Activated CD4-positive, alpha-beta memory T cell treated with anti-CD3 and anti-CD28 coated beads for 36 hours (primary cell): ENCODE measurements at regions of chr12 and their contacts with region 1.

Region 1: DNA sequence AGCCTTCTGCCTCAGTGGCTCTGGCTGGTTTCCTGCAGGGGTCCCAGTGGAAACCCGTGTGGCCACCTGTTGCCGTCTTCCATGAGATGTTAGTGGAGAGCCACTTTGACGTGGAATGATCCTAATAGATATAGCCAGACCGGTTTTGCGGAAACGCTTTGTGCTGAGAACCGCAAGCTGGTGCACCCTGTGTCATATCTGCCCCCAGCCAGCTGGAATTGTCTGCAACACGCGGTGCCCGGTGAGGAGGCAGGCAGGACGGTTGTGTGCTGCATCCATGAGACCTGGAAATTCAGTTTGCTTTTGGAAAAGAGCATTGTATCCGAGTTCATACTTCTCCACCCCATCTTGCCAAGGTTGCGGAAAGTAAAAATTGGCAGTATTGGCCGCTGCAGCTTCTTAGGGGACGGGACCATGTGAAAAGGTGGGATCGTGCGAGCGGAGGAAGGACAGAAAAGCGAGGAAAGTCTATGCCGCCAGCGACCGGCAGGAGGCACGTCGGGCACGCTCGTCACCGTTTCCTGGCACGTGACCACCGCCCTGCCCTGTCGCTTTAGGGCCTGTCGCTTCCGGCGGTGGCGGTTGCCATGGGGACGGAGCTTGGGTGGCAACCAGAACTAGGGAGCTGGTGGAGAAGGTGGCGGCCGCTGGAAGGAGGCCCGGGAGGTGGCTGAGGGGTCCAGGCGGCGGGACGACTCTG is at the start of gene CFAP251:
- DNase-seq: peak; percentile 98
- H3K4me3 Mint-ChIP-seq: peak within 1 kb of the TSS; percentile 77
- H3K27ac Mint-ChIP-seq: peak within 1 kb of the TSS; percentile 84
- H3K4me1 Mint-ChIP-seq: peaks cover 14% of the 10 kb centered on the region
- H3K27me3 Mint-ChIP-seq: no peaks in the 10 kb centered on the region
- total RNA-seq, gene CFAP251: 1.3 to 1.6 TPM

Region 2: GRCh38 chr12:122021822-122022526 is 103.8 kb after region 1 on chr12 and contains the start of gene BCL7A:
- CTCF ChIA-PET with region 1: interaction called, 3 read pairs
- POLR2A ChIA-PET with region 1: no interaction called
- intact Hi-C with region 1: loop called (anchors 10 kb)
- DNase-seq: peak; percentile 65
- H3K4me3 Mint-ChIP-seq: peak within 1 kb of the TSS; percentile 78
- H3K27ac Mint-ChIP-seq: peak within 1 kb of the TSS; percentile 49
- H3K4me1 Mint-ChIP-seq: peaks cover 10% of the 10 kb centered on the region
- H3K27me3 Mint-ChIP-seq: peaks cover 11% of the 10 kb centered on the region
- total RNA-seq, gene BCL7A: 3.6 to 4.0 TPM